Activated CD8-positive, alpha-beta T cell treated with anti-CD3 and anti-CD28 coated beads for 36 hours (primary cell): ENCODE measurements at regions of chr1 and their contacts with region 1.

Region 1: GRCh38 chr1:45621501-45621836 is 2.4 kb downstream of the CCDC17 start:
- DNase-seq: no peak
- ATAC-seq: no peak
- H3K4me3 Mint-ChIP-seq: no peak overlapping the region
- H3K27ac Mint-ChIP-seq: peak overlapping the region; percentile 25
- H3K4me1 Mint-ChIP-seq: no peaks in the 10 kb centered on the region
- H3K27me3 Mint-ChIP-seq: no peaks in the 10 kb centered on the region
- CTCF ChIP-seq: no peak

Region 2: GRCh38 chr1:45608175-45609156 is 13.0 kb before region 1 on chr1:
- CTCF ChIA-PET with region 1: interaction called, 4 read pairs
- POLR2A ChIA-PET with region 1: interaction called, 19 read pairs
- intact Hi-C with region 1: no loop called
- DNase-seq: no peak
- ATAC-seq: no peak
- H3K4me3 Mint-ChIP-seq: no peak overlapping the region
- H3K27ac Mint-ChIP-seq: peak overlapping the region; percentile 13
- H3K4me1 Mint-ChIP-seq: peaks cover 18% of the 10 kb centered on the region
- H3K27me3 Mint-ChIP-seq: no peaks in the 10 kb centered on the region
- CTCF ChIP-seq: no peak

Region 3: DNA sequence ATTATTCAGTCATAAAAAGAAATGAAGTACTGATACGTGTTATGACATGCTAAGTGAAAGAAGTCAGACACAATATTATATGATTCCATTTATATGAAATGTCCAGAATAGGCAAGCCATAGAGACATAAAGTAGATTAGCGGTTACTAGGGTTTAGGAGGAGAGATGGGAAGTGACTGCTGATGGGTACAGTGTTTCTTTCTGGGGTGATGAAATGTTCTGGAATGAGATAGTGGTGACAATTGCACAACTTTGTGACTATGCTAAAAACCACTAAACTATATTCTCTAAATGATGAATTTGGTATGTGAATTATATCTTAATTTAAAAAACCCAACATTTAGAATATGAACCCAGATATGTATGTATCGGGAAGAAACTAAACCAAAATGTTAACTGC is 101.3 kb after region 1 on chr1:
- CTCF ChIA-PET with region 1: no interaction called
- POLR2A ChIA-PET with region 1: no interaction called
- intact Hi-C with region 1: no loop called
- DNase-seq: no peak
- ATAC-seq: no peak
- H3K4me3 Mint-ChIP-seq: no peak overlapping the region
- H3K27ac Mint-ChIP-seq: no peak overlapping the region
- H3K4me1 Mint-ChIP-seq: no peaks in the 10 kb centered on the region
- H3K27me3 Mint-ChIP-seq: no peaks in the 10 kb centered on the region
- CTCF ChIP-seq: no peak

Region 4: GRCh38 chr1:45945426-45945825 is 324.0 kb after region 1 on chr1:
- CTCF ChIA-PET with region 1: no interaction called
- POLR2A ChIA-PET with region 1: no interaction called
- intact Hi-C with region 1: no loop called
- DNase-seq: no peak
- ATAC-seq: no peak
- H3K4me3 Mint-ChIP-seq: no peak overlapping the region
- H3K27ac Mint-ChIP-seq: no peak overlapping the region
- H3K4me1 Mint-ChIP-seq: no peaks in the 10 kb centered on the region
- H3K27me3 Mint-ChIP-seq: no peaks in the 10 kb centered on the region
- CTCF ChIP-seq: no peak